Heart right ventricle (tissue), 16 donors: ENCODE measurements at regions of chr16 and their contacts with region 1.

Region 1: DNA sequence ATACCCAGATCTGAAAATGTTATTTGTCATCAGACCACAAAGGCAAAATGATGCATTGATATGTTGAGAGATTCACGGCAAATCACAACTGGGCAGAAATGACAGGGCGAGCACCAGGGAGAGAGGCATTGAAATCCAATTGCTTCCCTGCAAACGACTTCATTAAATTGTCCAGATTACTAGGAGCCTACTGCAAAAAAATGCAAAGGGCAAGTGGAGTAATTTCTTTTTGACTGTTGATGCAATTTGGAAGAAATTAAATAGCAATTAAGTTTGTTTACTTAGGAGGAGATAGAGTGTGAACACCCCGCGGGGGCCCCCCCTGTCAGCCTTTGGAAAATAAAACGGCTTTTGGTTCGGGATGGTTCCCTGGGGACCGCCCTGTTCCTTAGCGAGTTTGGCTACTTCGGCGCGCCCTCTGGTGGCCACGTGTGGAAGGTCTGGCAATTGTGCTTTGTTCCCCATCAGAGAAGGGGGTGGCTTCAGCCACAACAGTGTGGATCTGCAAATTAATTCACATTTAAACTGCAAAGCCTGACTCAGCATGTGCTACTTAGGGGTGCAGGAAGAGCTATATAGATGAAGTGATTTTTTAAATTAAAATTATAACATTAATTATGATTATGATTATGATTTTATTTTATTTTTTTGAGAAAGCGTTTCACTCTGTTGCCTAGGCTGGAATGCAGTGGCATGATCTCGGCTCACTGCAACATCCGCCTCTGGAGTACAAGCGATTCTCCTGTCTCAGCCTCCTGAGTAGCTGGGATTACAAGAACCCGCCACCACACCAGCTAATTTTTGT is 14.5 kb upstream of the TMC7 start:
- DNase-seq: peak; percentile 88 to 89
- ATAC-seq: peak; percentile 91 to 96 (median 92)
- H3K4me3 ChIP-seq: peak overlapping the region in 9 of 10 donors; percentile 22 to 68 (median 43)
- H3K27ac ChIP-seq: no peak overlapping the region
- H3K4me1 ChIP-seq: peaks cover 0 to 8% (median 4%) of the 10 kb centered on the region in 9 donors
- H3K27me3 ChIP-seq: peaks cover 0 to 4% (median 0%) of the 10 kb centered on the region in 7 donors
- CTCF ChIP-seq: peak; percentile 89 to 98 (median 94)

Region 2: DNA sequence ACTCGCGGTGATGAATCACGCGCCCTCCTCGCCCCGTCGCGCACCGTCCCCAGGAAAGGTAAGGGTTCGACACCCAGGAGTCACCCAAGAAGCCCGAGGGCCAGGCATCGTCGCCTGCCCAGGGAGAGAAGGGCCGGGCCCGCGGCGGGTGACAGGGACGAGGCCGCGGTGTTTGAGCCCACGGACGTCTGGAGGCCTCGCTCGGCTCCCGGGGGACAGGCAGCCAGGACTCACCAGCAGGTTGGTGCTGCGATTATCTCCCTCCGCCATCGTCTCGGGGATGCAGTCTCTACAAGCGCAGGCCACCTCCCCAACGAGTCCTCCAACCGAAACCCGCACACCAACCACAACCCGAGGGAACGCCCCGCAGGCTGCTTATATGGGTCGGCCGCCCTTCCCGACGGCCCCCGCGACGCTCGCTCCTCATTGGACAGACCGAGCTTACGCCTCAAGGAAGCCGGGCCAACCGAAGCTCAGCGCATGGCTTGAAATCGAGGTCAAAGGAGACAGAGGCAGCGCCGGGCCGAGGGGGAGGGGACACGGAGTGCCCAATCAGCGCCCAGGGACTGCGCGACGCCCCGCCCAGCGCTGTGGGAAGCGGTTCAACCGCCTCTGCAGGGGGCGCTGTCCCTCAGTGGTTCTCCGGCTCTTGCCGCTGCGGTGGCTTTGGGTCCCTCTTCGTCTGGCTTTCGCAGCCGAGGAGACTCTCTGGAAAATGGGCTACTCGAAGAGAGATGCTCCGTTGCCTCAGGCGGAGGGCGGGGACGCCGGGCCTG is 167.9 kb before region 1 on chr16 and contains the start of gene ARL6IP1:
- intact Hi-C with region 1: loop called in 4 of 10 experiments (anchors 5 to 10 kb)
- DNase-seq: peak; percentile 99
- ATAC-seq: peak; percentile 99 to 100 (median 99)
- H3K4me3 ChIP-seq: peak within 1 kb of the TSS; percentile 78 to 97 (median 90)
- H3K27ac ChIP-seq: peak within 1 kb of the TSS in 9 of 10 donors; percentile 82 to 95 (median 87)
- H3K4me1 ChIP-seq: peaks cover 0 to 74% (median 49%) of the 10 kb centered on the region in 9 donors
- H3K27me3 ChIP-seq: no peaks in the 10 kb centered on the region
- CTCF ChIP-seq: peak; percentile 77 to 100 (median 93)
- total RNA-seq, gene ARL6IP1: 18.6 to 46.6 (median 21.1) TPM